Activated T-helper 1 cell treated with anti-CD3 and anti-CD28 coated beads, Interleukin-12 subunit alpha, Interleukin-12 subunit beta, Interleukin-2, Interleukin-4 antibody, amounts not matched to agents 30 ng/mL and 10 ng/mL and 1 ng/mL, durations not matched to agents 14 hours and 24 hours and 36 hours (primary cell): ENCODE measurements at regions of chr1 and their contacts with region 1.

Region 1: GRCh38 chr1:152745289-152745704 is 12.5 kb upstream of the KPRP start:
- DNase-seq: no peak
- H3K4me3 Mint-ChIP-seq: no peak overlapping the region
- H3K27ac Mint-ChIP-seq: no peak overlapping the region
- H3K4me1 Mint-ChIP-seq: no peaks in the 10 kb centered on the region
- H3K27me3 Mint-ChIP-seq: peaks cover 9% of the 10 kb centered on the region

Region 2: GRCh38 chr1:152811671-152812070 is 66.4 kb after region 1 on chr1 and contains the start of gene LCE1B:
- intact Hi-C with region 1: loop called (anchors 2 kb)
- DNase-seq: no peak
- H3K4me3 Mint-ChIP-seq: no peak within 1 kb of the TSS
- H3K27ac Mint-ChIP-seq: no peak within 1 kb of the TSS
- H3K4me1 Mint-ChIP-seq: no peaks in the 10 kb centered on the region
- H3K27me3 Mint-ChIP-seq: peaks cover 2% of the 10 kb centered on the region
- total RNA-seq, gene LCE1B: not detected in 2 replicates